Activated CD4-positive, alpha-beta memory T cell treated with anti-CD3 and anti-CD28 coated beads for 36 hours (primary cell): ENCODE measurements at regions of chr7 and their contacts with region 1.

Region 1: GRCh38 chr7:112898432-112899290 is 108.5 kb upstream of the TMEM168 start:
- DNase-seq: peak; percentile 42
- H3K4me3 Mint-ChIP-seq: no peak overlapping the region
- H3K27ac Mint-ChIP-seq: no peak overlapping the region
- H3K4me1 Mint-ChIP-seq: no peaks in the 10 kb centered on the region
- H3K27me3 Mint-ChIP-seq: no peaks in the 10 kb centered on the region

Region 2: GRCh38 chr7:112571852-112572607 is 326.6 kb before region 1 on chr7:
- CTCF ChIA-PET with region 1: interaction called, 3 read pairs
- POLR2A ChIA-PET with region 1: no interaction called
- intact Hi-C with region 1: loop called (anchors 5 kb)
- DNase-seq: no peak
- H3K4me3 Mint-ChIP-seq: no peak overlapping the region
- H3K27ac Mint-ChIP-seq: no peak overlapping the region
- H3K4me1 Mint-ChIP-seq: peaks cover 3% of the 10 kb centered on the region
- H3K27me3 Mint-ChIP-seq: peaks cover 5% of the 10 kb centered on the region

Region 3: GRCh38 chr7:112806156-112806555 is 92.5 kb before region 1 on chr7:
- CTCF ChIA-PET with region 1: no interaction called
- POLR2A ChIA-PET with region 1: no interaction called
- intact Hi-C with region 1: no loop called
- DNase-seq: no peak
- H3K4me3 Mint-ChIP-seq: no peak overlapping the region
- H3K27ac Mint-ChIP-seq: no peak overlapping the region
- H3K4me1 Mint-ChIP-seq: no peaks in the 10 kb centered on the region
- H3K27me3 Mint-ChIP-seq: no peaks in the 10 kb centered on the region

Region 4: DNA sequence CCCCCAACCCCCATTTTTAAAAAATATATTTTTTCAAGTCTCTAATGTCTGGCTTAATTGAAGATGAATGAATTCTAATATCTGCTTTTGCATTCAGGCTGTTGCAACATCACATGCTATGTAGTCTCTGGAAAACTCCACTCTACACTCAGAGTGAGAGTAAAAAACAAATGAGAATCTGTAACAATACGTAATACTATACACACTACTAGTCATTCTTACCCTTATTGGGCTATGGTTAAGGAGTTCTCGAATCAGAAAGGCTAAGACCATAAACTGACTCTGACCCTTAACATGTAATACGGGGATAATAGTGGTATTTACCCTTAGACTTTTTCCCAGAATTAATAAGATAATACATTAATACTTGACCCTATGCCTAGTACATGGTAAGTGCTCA is 65.6 kb before region 1 on chr7:
- CTCF ChIA-PET with region 1: no interaction called
- POLR2A ChIA-PET with region 1: no interaction called
- intact Hi-C with region 1: no loop called
- DNase-seq: no peak
- H3K4me3 Mint-ChIP-seq: no peak overlapping the region
- H3K27ac Mint-ChIP-seq: no peak overlapping the region
- H3K4me1 Mint-ChIP-seq: no peaks in the 10 kb centered on the region
- H3K27me3 Mint-ChIP-seq: no peaks in the 10 kb centered on the region